GM13977 (cell line): ENCODE measurements at regions of chr3 and their contacts with region 1.

Region 1: DNA sequence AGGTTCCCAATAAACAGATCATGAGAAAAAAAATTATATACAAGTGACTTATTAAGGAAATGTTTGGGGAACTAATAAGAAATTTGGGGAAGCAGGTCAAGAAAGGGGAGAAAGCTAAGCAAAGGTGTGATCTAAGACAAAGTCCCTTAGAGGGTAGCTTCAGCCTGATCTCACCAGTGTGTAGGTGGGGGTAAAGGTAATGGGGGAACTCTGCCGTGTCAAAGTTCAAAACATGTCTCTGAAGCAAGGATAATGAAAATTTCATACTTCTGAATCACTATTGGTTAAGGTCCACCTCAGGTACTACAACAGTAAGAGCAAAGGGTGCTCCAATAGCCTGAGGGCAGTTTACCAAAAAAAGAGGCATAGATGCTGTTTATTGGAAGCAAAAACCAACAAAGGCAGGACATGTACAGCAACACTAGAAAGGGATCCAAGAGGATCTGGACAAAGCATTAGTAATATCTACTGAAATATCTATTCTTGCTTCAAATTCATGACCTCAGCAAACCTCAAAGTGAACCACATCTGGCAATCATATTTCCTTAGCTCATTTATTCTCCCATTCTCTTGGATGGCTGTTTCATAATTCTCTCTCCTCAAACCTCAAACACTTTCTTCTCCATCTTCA is 6.9 kb downstream of the ACAD11 start:
- DNase-seq: no peak
- CTCF ChIP-seq: no peak

Region 2: DNA sequence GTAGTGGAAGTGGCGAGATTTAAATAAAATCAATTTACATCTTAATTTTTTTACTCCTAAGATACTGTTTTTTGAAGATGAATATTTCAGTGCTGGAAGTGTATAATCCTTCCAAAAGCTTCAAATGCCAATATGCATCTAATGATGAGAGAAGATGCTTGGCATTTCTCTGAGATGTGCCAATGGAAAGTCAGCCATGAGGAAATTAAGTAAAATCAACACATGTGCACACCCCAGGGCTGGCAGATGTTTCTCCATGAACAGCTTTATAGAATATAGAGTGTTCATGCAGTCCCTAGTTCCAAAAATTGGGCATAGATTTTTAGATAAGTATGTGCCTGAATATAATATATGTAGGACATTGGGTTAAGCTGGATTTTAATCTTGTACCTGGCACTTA is 708.1 kb before region 1 on chr3:
- in situ Hi-C with region 1: no loop called
- DNase-seq: no peak
- CTCF ChIP-seq: no peak

Region 3: GRCh38 chr3:132535575-132536441 is 116.9 kb before region 1 on chr3:
- in situ Hi-C with region 1: loop called (anchors 5 kb)
- DNase-seq: peak; percentile 33
- CTCF ChIP-seq: peak; percentile 65

Region 4: DNA sequence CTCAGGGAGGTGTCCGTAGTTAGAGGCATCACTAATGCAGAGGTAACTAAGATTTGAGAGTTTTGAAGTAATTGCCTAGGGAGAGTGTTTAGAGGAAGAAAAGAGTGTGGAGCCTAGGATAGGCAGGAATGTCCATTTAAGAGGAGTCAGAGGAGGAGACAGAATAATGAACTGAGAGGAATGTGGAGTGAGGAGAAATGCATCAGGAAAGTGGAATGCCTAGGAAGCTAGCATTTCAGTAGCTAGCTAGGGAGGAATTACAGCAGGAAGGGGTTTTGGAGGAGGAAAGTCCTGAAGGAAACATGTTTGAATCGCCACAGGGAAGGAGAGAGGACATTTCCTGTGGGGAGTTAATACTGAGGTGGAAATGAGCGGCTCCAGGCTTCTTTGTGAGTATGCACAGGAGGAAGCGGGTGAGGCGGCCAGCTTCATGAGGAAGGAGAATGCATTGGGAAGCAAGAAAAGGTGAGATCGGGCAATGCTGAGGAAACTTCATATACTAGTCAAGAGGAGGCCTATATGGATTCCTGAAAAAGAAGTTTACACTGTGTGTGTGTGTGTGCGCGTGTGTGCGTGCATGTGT is 539.7 kb after region 1 on chr3:
- in situ Hi-C with region 1: no loop called
- DNase-seq: no peak
- CTCF ChIP-seq: no peak